ENCODE measurements at regions of chr11 and their contacts with region 1.

Region 1: GRCh38 chr11:12110201-12110713 is at the start of gene MICAL2:
- DNase-seq: peak; percentile 66 to 94 (median 76)
- ATAC-seq: peak; percentile 99
- H3K4me3 ChIP-seq: peak within 1 kb of the TSS; percentile 58
- H3K4me3 Mint-ChIP-seq: peak within 1 kb of the TSS; percentile 72 to 92 (median 80)
- H3K27ac ChIP-seq: peak within 1 kb of the TSS; percentile 46
- H3K27ac Mint-ChIP-seq: peak within 1 kb of the TSS in 8 of 9 donors; percentile 15 to 96 (median 46)
- H3K4me1 ChIP-seq: peaks cover 0 to 21% of the 10 kb centered on the region in 2 donors
- H3K4me1 Mint-ChIP-seq: peaks cover 5 to 69% (median 12%) of the 10 kb centered on the region in 7 donors
- H3K27me3 ChIP-seq: no peaks in the 10 kb centered on the region
- H3K27me3 Mint-ChIP-seq: no peaks in the 10 kb centered on the region
- total RNA-seq, gene MICAL2: 5.8 to 112 (median 13.4) TPM

Region 2: DNA sequence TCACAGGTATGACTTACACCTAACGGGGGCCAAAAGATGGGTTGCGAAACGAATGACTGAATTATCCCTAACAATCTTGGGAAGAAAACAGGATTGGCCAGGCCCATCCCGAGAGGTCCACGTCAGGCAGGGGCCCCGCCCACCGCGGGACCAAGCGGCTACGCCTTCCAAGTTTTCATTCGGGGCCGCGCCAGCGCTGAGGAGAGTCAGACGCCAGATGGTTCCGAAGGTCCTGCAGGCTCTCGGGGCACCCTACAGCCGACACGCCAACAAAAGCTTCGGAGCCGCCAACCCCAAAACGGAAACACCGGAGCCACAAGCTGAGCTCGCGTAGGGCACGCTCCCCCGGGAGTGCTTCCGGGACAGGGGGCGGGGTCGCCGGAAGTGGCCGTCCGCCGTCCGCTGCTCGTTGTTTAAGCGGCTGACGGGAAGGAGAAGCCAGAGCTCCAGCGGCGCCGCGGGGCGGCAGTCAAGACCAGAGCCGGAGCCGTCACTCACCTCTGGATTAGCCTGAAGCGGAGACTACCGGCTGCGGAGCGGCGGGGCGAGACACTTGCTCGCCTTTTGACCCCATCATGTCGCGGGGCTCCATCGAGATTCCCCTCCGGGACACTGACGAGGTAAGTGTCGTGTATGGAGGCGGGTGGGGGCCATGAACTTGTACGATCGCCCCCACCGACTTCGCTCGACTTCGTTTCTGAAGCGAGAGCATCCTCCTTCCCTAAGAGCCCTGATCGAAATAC is 1359.2 kb before region 1 on chr11 and contains the start of gene CTR9:
- CTCF ChIA-PET with region 1: no interaction called
- POLR2A ChIA-PET with region 1: no interaction called
- intact Hi-C with region 1: loop called in 1 of 2 experiments (anchors 5 kb)
- DNase-seq: peak; percentile 78 to 94 (median 88)
- ATAC-seq: peak; percentile 96
- H3K4me3 ChIP-seq: peak within 1 kb of the TSS; percentile 79
- H3K4me3 Mint-ChIP-seq: peak within 1 kb of the TSS; percentile 95 to 99 (median 97)
- H3K27ac ChIP-seq: peak within 1 kb of the TSS; percentile 85
- H3K27ac Mint-ChIP-seq: peak within 1 kb of the TSS; percentile 90 to 96 (median 91)
- H3K4me1 ChIP-seq: peaks cover 7 to 8% of the 10 kb centered on the region in 2 donors
- H3K4me1 Mint-ChIP-seq: peaks cover 12 to 36% (median 31%) of the 10 kb centered on the region in 7 donors
- H3K27me3 ChIP-seq: no peaks in the 10 kb centered on the region
- H3K27me3 Mint-ChIP-seq: no peaks in the 10 kb centered on the region
- total RNA-seq, gene CTR9: 23.8 to 64.0 (median 47.8) TPM

Region 3: GRCh38 chr11:12087075-12088004 is 22.9 kb before region 1 on chr11:
- CTCF ChIA-PET with region 1: interaction called, 3 read pairs
- POLR2A ChIA-PET with region 1: no interaction called
- intact Hi-C with region 1: loop called in 1 of 2 experiments (anchors 1 kb)
- DNase-seq: peak in 2 of 9 donors; percentile 23 to 34
- ATAC-seq: peak; percentile 87
- H3K4me3 ChIP-seq: peak overlapping the region; percentile 4
- H3K4me3 Mint-ChIP-seq: peak overlapping the region in 8 of 10 donors; percentile 0 to 84 (median 36)
- H3K27ac ChIP-seq: no peak overlapping the region
- H3K27ac Mint-ChIP-seq: peak overlapping the region in 6 of 9 donors; percentile 5 to 85 (median 29)
- H3K4me1 ChIP-seq: peaks cover 33 to 60% of the 10 kb centered on the region in 2 donors
- H3K4me1 Mint-ChIP-seq: peaks cover 38 to 75% (median 57%) of the 10 kb centered on the region in 7 donors
- H3K27me3 ChIP-seq: no peaks in the 10 kb centered on the region
- H3K27me3 Mint-ChIP-seq: no peaks in the 10 kb centered on the region

Region 4: DNA sequence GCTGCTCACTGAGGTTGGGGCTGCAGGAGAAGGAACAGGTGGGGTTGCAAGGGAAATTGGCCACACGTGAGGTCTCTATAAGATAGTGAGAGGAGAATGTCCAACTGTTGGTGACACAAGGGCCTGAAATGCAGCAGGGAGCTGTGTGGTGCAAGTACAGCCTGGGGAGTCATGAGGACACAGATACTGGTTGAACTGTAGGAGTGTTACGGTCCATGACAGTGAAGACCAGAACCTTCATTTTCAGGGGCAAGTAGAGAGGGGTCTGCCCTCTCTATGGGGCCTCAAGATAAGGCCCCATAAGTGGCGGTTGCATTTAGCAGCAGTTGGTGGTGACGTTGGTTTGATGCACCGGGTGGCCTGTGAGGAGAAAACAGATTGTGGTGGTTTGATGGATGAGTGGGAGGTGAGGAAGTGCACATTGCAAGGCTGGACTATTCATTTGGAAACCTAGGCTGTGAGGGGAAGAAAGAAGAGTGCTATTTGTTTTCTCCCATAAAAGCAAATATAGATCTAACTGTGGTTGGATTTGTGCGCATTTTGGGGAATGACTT is 39.5 kb after region 1 on chr11:
- CTCF ChIA-PET with region 1: no interaction called
- POLR2A ChIA-PET with region 1: interaction called, 3 read pairs
- intact Hi-C with region 1: loop called in 1 of 2 experiments (anchors 2 kb)
- DNase-seq: peak in 1 of 9 donors; percentile 64
- ATAC-seq: no peak
- H3K4me3 ChIP-seq: no peak overlapping the region
- H3K4me3 Mint-ChIP-seq: peak overlapping the region in 1 of 10 donors; percentile 69
- H3K27ac ChIP-seq: no peak overlapping the region
- H3K27ac Mint-ChIP-seq: peak overlapping the region in 6 of 9 donors; percentile 8 to 88 (median 38)
- H3K4me1 ChIP-seq: peaks cover 0 to 16% of the 10 kb centered on the region in 2 donors
- H3K4me1 Mint-ChIP-seq: peaks cover 17 to 80% (median 39%) of the 10 kb centered on the region in 7 donors
- H3K27me3 ChIP-seq: no peaks in the 10 kb centered on the region
- H3K27me3 Mint-ChIP-seq: no peaks in the 10 kb centered on the region

Region 5: GRCh38 chr11:12195768-12196167 is 85.5 kb after region 1 on chr11:
- CTCF ChIA-PET with region 1: no interaction called
- POLR2A ChIA-PET with region 1: no interaction called
- intact Hi-C with region 1: loop called (anchors 2 kb)
- DNase-seq: peak in 8 of 9 donors; percentile 55 to 77 (median 70)
- ATAC-seq: peak; percentile 83
- H3K4me3 ChIP-seq: peak overlapping the region; percentile 41
- H3K4me3 Mint-ChIP-seq: peak overlapping the region; percentile 68 to 92 (median 81)
- H3K27ac ChIP-seq: peak overlapping the region; percentile 57
- H3K27ac Mint-ChIP-seq: peak overlapping the region; percentile 91 to 97 (median 94)
- H3K4me1 ChIP-seq: peaks cover 40 to 58% of the 10 kb centered on the region in 2 donors
- H3K4me1 Mint-ChIP-seq: peaks cover 50 to 89% (median 75%) of the 10 kb centered on the region in 7 donors
- H3K27me3 ChIP-seq: no peaks in the 10 kb centered on the region
- H3K27me3 Mint-ChIP-seq: no peaks in the 10 kb centered on the region

Region 6: DNA sequence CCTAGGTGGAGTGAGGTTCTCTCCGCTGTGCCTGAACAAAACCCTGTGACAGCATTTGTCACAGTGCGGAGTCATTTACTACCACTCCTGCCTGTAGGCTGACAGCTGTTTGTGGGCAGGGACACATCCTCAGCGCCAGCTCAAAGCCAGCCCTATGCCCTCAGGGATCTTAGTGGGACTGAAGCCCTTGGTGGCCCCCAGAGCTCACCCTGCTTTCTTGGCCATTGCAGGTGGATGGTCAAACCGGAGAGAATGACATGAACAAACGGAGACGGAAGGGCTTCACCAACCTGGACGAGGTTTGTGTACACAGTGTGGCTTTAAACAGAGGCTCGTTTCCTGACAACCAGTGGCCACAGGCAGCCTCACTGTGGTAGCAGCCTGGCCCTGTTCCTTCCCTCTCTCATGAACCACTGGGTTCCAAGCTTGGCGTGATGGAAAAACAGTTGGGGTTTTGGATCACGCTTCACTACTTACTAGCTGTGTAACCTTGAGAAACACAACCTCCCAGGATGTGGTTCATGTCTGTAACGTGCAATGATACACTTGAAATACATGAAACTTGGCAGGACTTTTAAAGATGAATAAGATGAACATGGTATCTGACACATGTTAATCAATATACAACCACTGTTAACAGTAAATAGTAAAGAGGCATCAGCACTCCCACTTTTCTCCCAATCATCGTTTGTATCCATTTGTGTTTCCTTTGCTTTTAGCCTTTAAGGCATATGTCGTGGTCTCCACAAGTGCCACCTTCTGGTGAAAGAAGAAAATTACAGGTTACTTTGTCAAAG is 125.9 kb after region 1 on chr11:
- CTCF ChIA-PET with region 1: interaction called, 6 read pairs
- POLR2A ChIA-PET with region 1: no interaction called
- intact Hi-C with region 1: loop called in 1 of 2 experiments (anchors 1 kb)
- DNase-seq: peak in 8 of 9 donors; percentile 33 to 78 (median 72)
- ATAC-seq: peak; percentile 79
- H3K4me3 ChIP-seq: no peak overlapping the region
- H3K4me3 Mint-ChIP-seq: peak overlapping the region; percentile 17 to 81 (median 68)
- H3K27ac ChIP-seq: no peak overlapping the region
- H3K27ac Mint-ChIP-seq: peak overlapping the region; percentile 27 to 95 (median 77)
- H3K4me1 ChIP-seq: peaks cover 9 to 10% of the 10 kb centered on the region in 2 donors
- H3K4me1 Mint-ChIP-seq: peaks cover 18 to 41% (median 23%) of the 10 kb centered on the region in 7 donors
- H3K27me3 ChIP-seq: no peaks in the 10 kb centered on the region
- H3K27me3 Mint-ChIP-seq: no peaks in the 10 kb centered on the region

Region 7: GRCh38 chr11:13276832-13277767 is 1166.8 kb after region 1 on chr11:
- CTCF ChIA-PET with region 1: no interaction called
- POLR2A ChIA-PET with region 1: no interaction called
- intact Hi-C with region 1: loop called in 1 of 2 experiments (anchors 2 kb)
- DNase-seq: peak; percentile 93 to 97 (median 96)
- ATAC-seq: peak; percentile 91
- H3K4me3 ChIP-seq: peak overlapping the region; percentile 80
- H3K4me3 Mint-ChIP-seq: peak overlapping the region; percentile 95 to 99 (median 97)
- H3K27ac ChIP-seq: peak overlapping the region; percentile 81
- H3K27ac Mint-ChIP-seq: peak overlapping the region; percentile 72 to 97 (median 91)
- H3K4me1 ChIP-seq: peaks cover 19 to 29% of the 10 kb centered on the region in 2 donors
- H3K4me1 Mint-ChIP-seq: peaks cover 32 to 47% (median 40%) of the 10 kb centered on the region in 7 donors
- H3K27me3 ChIP-seq: no peaks in the 10 kb centered on the region
- H3K27me3 Mint-ChIP-seq: peaks cover 0 to 51% (median 0%) of the 10 kb centered on the region in 5 donors